ENCODE measurements at regions of chr7 and their contacts with region 1.

Region 1: DNA sequence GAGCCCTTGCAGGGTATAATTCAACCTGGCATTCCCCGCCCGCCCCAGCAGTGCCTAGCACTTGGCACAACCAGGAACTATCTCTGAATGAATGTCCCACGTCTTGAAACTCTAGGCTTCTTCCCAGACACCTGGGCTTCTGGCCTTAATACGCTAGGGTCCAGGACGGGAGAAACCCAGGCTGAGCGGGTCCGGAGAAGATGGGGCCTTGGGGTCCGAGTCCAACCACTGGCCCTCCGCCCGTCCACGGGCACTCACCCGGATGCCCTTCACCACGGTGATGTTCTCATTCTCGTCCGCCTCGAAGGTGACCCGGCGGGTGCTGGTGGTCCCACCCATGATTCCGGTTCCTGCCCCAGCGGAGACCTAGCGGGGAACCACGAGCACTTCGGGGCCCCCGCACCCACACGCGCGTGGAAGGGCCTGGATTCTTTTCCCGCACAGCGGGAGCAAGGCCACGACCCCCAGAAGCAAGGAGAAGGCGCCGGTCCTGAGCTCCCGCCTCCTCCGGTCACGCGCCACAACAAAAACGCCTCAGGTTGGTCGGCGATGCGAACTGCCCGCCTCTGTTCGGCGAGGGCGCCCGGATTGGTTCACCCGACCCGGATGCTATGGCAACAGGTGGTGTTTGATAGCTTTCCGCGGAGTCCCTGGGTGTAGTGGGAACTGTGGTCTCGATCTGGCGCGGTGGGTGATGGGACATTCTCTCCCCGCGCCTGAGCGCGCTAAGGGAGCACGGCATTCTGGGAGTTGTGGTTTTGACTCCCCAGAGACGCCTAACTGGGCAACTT is at the start of gene CHCHD3:
- DNase-seq: peak; percentile 98 to 99 (median 98)
- ATAC-seq: peak; percentile 99 to 100 (median 100)
- H3K4me3 ChIP-seq: peak within 1 kb of the TSS; percentile 52 to 95 (median 86)
- H3K27ac ChIP-seq: peak within 1 kb of the TSS; percentile 46 to 95 (median 88)
- H3K4me1 ChIP-seq: peaks cover 0 to 49% (median 29%) of the 10 kb centered on the region in 12 donors
- H3K27me3 ChIP-seq: no peaks in the 10 kb centered on the region
- CTCF ChIP-seq: no peak
- POLR2A ChIP-seq: peak; percentile 42 to 82
- total RNA-seq, gene CHCHD3: 92.9 to 197 (median 176) TPM

Region 2: GRCh38 chr7:133155146-133155545 is 73.4 kb after region 1 on chr7:
- intact Hi-C with region 1: no loop called
- DNase-seq: no peak
- ATAC-seq: no peak
- H3K4me3 ChIP-seq: no peak overlapping the region
- H3K27ac ChIP-seq: no peak overlapping the region
- H3K4me1 ChIP-seq: no peaks in the 10 kb centered on the region
- H3K27me3 ChIP-seq: no peaks in the 10 kb centered on the region
- CTCF ChIP-seq: no peak
- POLR2A ChIP-seq: no peak

Region 3: GRCh38 chr7:133252858-133253518 is 171.2 kb after region 1 on chr7 and contains the start of gene EXOC4:
- intact Hi-C with region 1: loop called in 3 of 10 experiments (anchors 1 to 10 kb)
- DNase-seq: peak; percentile 87 to 95 (median 93)
- ATAC-seq: peak; percentile 100
- H3K4me3 ChIP-seq: peak within 1 kb of the TSS; percentile 57 to 96 (median 90)
- H3K27ac ChIP-seq: peak within 1 kb of the TSS in 11 of 12 donors; percentile 59 to 90 (median 86)
- H3K4me1 ChIP-seq: peaks cover 0 to 35% (median 9%) of the 10 kb centered on the region in 12 donors
- H3K27me3 ChIP-seq: no peaks in the 10 kb centered on the region
- CTCF ChIP-seq: no peak
- POLR2A ChIP-seq: peak in 1 of 2 donors; percentile 60
- total RNA-seq, gene EXOC4: 26.1 to 61.2 (median 35.2) TPM

Measured in heart left ventricle (tissue), 16 donors.